CD8-positive, alpha-beta T cell (primary cell): ENCODE measurements at regions of chr7 and their contacts with region 1.

Region 1: DNA sequence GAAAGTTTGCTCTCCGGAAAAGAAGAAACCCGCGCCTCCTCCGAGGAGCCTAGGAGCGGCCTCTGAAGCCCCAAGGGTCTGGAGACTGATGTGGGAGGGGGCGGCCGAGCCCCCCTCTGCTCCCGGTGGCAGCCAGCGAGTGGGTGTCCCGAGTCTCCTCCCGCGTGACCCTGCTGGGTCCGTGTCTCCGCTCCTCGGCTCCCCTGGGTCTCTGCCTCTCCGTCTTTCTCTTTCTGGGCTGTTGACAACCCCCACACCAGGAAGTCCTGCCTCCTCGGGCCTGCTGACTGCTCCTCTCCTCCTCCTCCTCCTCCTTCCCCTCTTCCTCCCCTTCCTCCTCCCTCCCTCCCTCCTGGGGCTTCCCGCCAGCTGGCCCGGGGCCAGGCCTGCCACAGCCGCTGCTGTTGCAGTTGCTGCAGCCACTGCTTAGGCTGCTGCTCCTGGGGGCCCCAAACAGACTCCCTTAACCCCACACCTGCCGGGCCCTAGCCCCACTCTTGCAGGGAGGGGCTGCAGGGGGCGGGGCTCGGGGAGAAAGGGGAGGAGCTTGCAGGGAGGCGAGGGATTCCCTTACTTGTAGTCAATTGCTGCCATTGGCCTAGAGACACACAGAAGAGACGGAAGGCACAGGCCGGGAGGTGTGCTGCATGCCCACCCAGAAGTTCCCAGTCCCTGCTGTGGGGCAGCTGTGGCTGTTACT is at the start of gene TSC22D4:
- DNase-seq: peak; percentile 85 to 97 (median 94)
- ATAC-seq: peak; percentile 69
- H3K4me3 ChIP-seq: peak within 1 kb of the TSS; percentile 82 to 96
- H3K4me3 Mint-ChIP-seq: peak within 1 kb of the TSS; percentile 93
- H3K27ac ChIP-seq: peak within 1 kb of the TSS; percentile 72 to 75
- H3K27ac Mint-ChIP-seq: peak within 1 kb of the TSS; percentile 89
- H3K4me1 ChIP-seq: peaks cover 54% of the 10 kb centered on the region
- H3K4me1 Mint-ChIP-seq: peaks cover 44% of the 10 kb centered on the region
- H3K27me3 ChIP-seq: no peaks in the 10 kb centered on the region
- H3K27me3 Mint-ChIP-seq: no peaks in the 10 kb centered on the region
- CTCF ChIP-seq: no peak
- total RNA-seq, gene TSC22D4: 30.7 to 32.3 TPM

Region 2: GRCh38 chr7:100435401-100436304 is 43.5 kb before region 1 on chr7:
- CTCF ChIA-PET with region 1: interaction called, 3 read pairs
- POLR2A ChIA-PET with region 1: interaction called, 27 read pairs
- intact Hi-C with region 1: loop called in 1 of 2 experiments (anchors 2 kb)
- DNase-seq: peak in 8 of 9 experiments; percentile 35 to 76 (median 52)
- ATAC-seq: peak; percentile 32
- H3K4me3 ChIP-seq: peak overlapping the region; percentile 75 to 90
- H3K4me3 Mint-ChIP-seq: peak overlapping the region; percentile 94
- H3K27ac ChIP-seq: peak overlapping the region; percentile 90 to 96
- H3K27ac Mint-ChIP-seq: peak overlapping the region; percentile 97
- H3K4me1 ChIP-seq: peaks cover 38% of the 10 kb centered on the region
- H3K4me1 Mint-ChIP-seq: peaks cover 51% of the 10 kb centered on the region
- H3K27me3 ChIP-seq: no peaks in the 10 kb centered on the region
- H3K27me3 Mint-ChIP-seq: no peaks in the 10 kb centered on the region
- CTCF ChIP-seq: no peak

Region 3: DNA sequence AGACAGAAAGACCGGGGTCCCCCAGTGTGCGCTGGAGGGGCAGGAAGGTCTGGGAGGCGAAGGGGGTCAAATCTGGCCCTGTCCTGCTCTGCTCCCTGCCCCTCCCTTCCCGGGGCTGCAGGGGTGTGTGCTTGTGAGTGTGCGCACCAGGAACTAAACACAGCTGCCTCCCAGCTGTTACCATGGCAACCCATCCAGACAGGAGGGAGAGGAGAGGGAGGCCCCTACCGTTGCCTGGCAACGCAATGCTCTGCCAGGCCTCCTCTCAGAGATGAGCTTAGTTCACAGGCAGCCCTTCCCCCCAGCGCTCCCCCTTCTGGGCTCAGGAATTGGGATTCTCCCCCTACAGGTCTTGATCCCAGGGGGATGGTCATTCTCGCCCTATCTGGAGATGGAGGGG is 10.7 kb after region 1 on chr7:
- CTCF ChIA-PET with region 1: interaction called, 12 read pairs
- POLR2A ChIA-PET with region 1: no interaction called
- intact Hi-C with region 1: no loop called
- DNase-seq: peak in 4 of 9 experiments; percentile 24 to 66 (median 49)
- ATAC-seq: no peak
- H3K4me3 ChIP-seq: no peak overlapping the region
- H3K4me3 Mint-ChIP-seq: no peak overlapping the region
- H3K27ac ChIP-seq: no peak overlapping the region
- H3K27ac Mint-ChIP-seq: no peak overlapping the region
- H3K4me1 ChIP-seq: peaks cover 12% of the 10 kb centered on the region
- H3K4me1 Mint-ChIP-seq: peaks cover 15% of the 10 kb centered on the region
- H3K27me3 ChIP-seq: no peaks in the 10 kb centered on the region
- H3K27me3 Mint-ChIP-seq: no peaks in the 10 kb centered on the region
- CTCF ChIP-seq: no peak

Region 4: DNA sequence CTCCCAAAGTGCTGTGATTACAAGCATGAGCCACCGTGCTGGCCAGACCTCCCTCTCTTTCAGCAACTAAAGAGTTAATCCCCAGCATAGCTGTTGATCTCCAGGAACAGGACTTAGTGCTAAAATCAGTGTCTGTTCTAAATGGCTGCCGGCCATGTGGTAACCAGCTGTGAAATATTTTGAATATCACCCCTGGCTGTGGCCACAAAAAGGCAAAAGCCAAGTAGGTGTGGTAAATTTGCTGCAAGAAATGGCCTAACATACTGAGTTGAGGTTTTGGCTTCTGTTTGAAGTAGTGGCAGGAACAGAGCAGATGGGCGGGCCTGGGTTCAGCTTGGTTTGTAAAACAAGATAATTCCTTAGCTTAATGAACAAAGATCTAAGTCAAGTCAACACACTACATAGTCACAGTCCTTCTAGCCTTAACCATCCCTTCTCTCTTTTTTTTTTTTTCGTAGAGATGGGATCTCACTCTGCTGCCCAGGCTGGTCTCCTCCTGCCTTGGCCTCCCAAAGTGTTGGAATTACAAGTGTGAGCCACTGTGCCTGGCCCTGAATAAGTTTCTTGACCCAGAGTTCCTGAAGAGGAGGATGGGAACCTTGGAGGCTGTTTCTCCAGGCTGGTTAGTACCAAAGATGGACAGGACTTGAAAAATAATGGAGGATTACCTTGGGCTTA is 37.2 kb after region 1 on chr7:
- CTCF ChIA-PET with region 1: interaction called, 13 read pairs
- POLR2A ChIA-PET with region 1: interaction called, 3 read pairs
- intact Hi-C with region 1: no loop called
- DNase-seq: peak; percentile 36 to 87 (median 61)
- ATAC-seq: peak; percentile 92
- H3K4me3 ChIP-seq: peak overlapping the region in 1 of 2 experiments; percentile 5
- H3K4me3 Mint-ChIP-seq: peak overlapping the region; percentile 73
- H3K27ac ChIP-seq: peak overlapping the region in 1 of 2 experiments; percentile 9
- H3K27ac Mint-ChIP-seq: peak overlapping the region; percentile 83
- H3K4me1 ChIP-seq: peaks cover 30% of the 10 kb centered on the region
- H3K4me1 Mint-ChIP-seq: peaks cover 42% of the 10 kb centered on the region
- H3K27me3 ChIP-seq: peaks cover 0 to 3% of the 10 kb centered on the region in 2 experiments
- H3K27me3 Mint-ChIP-seq: no peaks in the 10 kb centered on the region
- CTCF ChIP-seq: no peak

Region 5: DNA sequence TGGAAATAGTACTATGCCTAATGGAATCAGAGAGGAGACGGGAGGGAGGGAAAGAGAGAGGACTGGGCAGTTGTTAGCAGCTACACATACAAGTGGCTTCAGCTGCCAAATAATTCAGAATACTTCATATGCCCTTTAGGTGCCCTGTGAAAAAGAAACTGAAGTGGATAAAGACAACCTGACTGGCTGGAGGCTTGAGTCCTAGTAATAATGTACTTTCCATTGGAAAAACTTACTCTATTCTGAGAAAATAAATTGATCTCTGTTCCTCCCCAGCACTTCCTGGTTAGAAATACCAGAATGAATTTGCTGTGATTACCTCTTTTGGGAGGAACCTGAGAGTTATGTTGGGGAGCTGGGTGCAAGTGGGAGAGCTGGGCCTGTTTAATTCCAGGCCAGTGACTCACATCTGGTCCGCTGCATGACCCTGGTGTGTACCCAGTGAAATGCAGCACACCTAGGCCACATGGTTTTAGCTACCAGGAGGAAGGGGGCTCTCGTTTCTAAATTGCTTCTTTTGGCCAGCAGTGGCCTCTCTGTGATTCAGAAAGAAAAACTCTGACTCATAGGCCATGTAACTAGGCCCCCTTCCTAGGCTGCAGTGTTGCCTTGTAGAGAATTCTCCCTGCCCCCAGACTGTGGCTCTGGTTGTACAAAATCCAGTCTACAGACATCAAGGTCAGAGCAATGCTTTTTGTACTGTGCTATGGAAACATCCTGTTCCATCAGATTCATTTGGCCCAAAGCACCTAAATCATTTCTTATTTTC is 66.4 kb after region 1 on chr7:
- CTCF ChIA-PET with region 1: interaction called, 12 read pairs
- POLR2A ChIA-PET with region 1: interaction called, 4 read pairs
- intact Hi-C with region 1: loop called in 1 of 2 experiments (anchors 2 kb)
- DNase-seq: peak in 6 of 9 experiments; percentile 53 to 65 (median 57)
- ATAC-seq: peak; percentile 75
- H3K4me3 ChIP-seq: peak overlapping the region; percentile 0 to 21
- H3K4me3 Mint-ChIP-seq: peak overlapping the region; percentile 72
- H3K27ac ChIP-seq: peak overlapping the region; percentile 17 to 84
- H3K27ac Mint-ChIP-seq: peak overlapping the region; percentile 91
- H3K4me1 ChIP-seq: peaks cover 91% of the 10 kb centered on the region
- H3K4me1 Mint-ChIP-seq: peaks cover 91% of the 10 kb centered on the region
- H3K27me3 ChIP-seq: no peaks in the 10 kb centered on the region
- H3K27me3 Mint-ChIP-seq: no peaks in the 10 kb centered on the region
- CTCF ChIP-seq: no peak

Region 6: GRCh38 chr7:100642534-100642907 is 163.4 kb after region 1 on chr7:
- CTCF ChIA-PET with region 1: no interaction called
- POLR2A ChIA-PET with region 1: no interaction called
- intact Hi-C with region 1: no loop called
- DNase-seq: peak in 4 of 9 experiments; percentile 13 to 48 (median 32)
- ATAC-seq: peak; percentile 38
- H3K4me3 ChIP-seq: no peak overlapping the region
- H3K4me3 Mint-ChIP-seq: no peak overlapping the region
- H3K27ac ChIP-seq: no peak overlapping the region
- H3K27ac Mint-ChIP-seq: no peak overlapping the region
- H3K4me1 ChIP-seq: no peaks in the 10 kb centered on the region
- H3K4me1 Mint-ChIP-seq: no peaks in the 10 kb centered on the region
- H3K27me3 ChIP-seq: no peaks in the 10 kb centered on the region
- H3K27me3 Mint-ChIP-seq: peaks cover 2% of the 10 kb centered on the region
- CTCF ChIP-seq: no peak